ENCODE measurements at regions of chr9 and their contacts with region 1.

Region 1: GRCh38 chr9:73154760-73155159 is 3.1 kb downstream of the ANXA1 start:
- DNase-seq: peak; percentile 22
- H3K4me3 Mint-ChIP-seq: peak overlapping the region; percentile 88
- H3K27ac Mint-ChIP-seq: peak overlapping the region; percentile 97
- H3K4me1 Mint-ChIP-seq: peaks cover 30% of the 10 kb centered on the region
- H3K27me3 Mint-ChIP-seq: no peaks in the 10 kb centered on the region
- CTCF ChIP-seq: no peak

Region 2: GRCh38 chr9:73104342-73104741 is 50.4 kb before region 1 on chr9:
- CTCF ChIA-PET with region 1: interaction called, 21 read pairs
- POLR2A ChIA-PET with region 1: interaction called, 47 read pairs
- intact Hi-C with region 1: loop called (anchors 1 kb)
- DNase-seq: no peak
- H3K4me3 Mint-ChIP-seq: no peak overlapping the region
- H3K27ac Mint-ChIP-seq: no peak overlapping the region
- H3K4me1 Mint-ChIP-seq: peaks cover 7% of the 10 kb centered on the region
- H3K27me3 Mint-ChIP-seq: no peaks in the 10 kb centered on the region
- CTCF ChIP-seq: no peak

Region 3: DNA sequence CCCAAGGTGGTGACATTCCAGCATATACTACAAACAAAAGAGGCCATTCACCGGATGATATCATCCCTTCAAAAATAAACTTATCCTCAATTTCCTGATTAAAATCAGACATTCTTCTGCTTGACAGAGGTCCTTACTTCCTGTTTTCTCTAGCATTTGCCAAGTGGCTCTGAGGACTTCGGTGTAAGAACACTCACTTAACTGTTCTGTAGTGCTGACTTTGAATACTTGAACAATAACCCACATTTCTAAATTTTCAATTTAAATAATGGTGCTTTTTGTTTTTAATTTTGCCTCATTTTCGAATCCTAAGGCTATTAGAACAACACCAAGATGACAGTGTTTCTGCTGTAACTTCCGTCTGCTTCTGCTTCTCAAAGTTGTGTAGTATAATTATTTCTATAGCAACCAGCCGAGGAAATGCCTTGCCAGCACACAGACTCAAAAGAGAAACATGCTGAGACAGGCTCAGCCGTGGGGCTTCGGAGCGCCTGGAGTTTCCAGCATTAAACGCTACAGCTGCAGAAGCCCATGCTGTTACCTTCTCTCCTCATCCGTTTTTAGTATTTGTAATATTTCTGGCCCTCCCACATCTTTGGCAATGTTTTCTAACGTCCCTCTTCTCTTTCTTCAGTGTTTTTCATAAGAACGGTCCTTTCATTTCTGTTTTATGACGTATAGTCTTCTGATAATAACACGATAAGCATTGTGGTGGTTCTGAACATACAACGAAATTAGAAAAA is 22.6 kb before region 1 on chr9:
- CTCF ChIA-PET with region 1: interaction called, 6 read pairs
- POLR2A ChIA-PET with region 1: interaction called, 241 read pairs
- intact Hi-C with region 1: loop called (anchors 1 kb)
- DNase-seq: peak; percentile 90
- H3K4me3 Mint-ChIP-seq: peak overlapping the region; percentile 76
- H3K27ac Mint-ChIP-seq: peak overlapping the region; percentile 97
- H3K4me1 Mint-ChIP-seq: peaks cover 31% of the 10 kb centered on the region
- H3K27me3 Mint-ChIP-seq: no peaks in the 10 kb centered on the region
- CTCF ChIP-seq: no peak

Region 4: DNA sequence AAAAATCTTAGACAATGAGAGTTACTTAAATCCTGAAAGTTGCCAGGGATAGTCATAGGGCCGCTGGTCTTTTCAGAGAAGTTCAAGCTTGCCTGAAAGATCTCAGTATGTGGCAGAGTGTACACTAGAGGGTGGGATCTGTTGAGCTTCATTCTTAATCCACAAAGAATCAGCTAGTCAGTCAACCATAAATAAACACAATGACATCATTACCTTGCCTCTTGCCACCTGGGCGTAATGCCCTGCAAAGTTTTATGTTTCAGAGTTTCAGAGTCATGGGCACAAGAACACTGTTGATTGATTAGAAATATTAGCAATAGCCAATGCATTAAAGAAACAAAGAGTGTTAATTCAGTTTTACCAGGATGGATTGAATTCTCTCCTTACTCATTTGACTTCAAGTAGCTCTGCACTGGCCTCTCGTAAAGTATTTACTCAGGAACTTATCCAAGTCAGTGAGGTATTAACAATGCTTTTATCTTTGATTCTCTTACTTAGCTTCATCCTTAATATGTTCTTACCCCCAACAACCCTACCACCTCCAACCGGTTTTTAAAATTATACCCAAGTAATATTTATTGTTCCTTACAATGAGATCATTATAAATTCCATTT is 17.4 kb before region 1 on chr9:
- CTCF ChIA-PET with region 1: interaction called, 6 read pairs
- POLR2A ChIA-PET with region 1: interaction called, 241 read pairs
- intact Hi-C with region 1: loop called (anchors 1 kb)
- DNase-seq: peak; percentile 67
- H3K4me3 Mint-ChIP-seq: peak overlapping the region; percentile 56
- H3K27ac Mint-ChIP-seq: peak overlapping the region; percentile 7
- H3K4me1 Mint-ChIP-seq: peaks cover 28% of the 10 kb centered on the region
- H3K27me3 Mint-ChIP-seq: no peaks in the 10 kb centered on the region
- CTCF ChIP-seq: no peak

Region 5: GRCh38 chr9:73143606-73144328 is 11.0 kb before region 1 on chr9:
- CTCF ChIA-PET with region 1: interaction called, 6 read pairs
- POLR2A ChIA-PET with region 1: interaction called, 66 read pairs
- intact Hi-C with region 1: no loop called
- DNase-seq: peak; percentile 93
- H3K4me3 Mint-ChIP-seq: no peak overlapping the region
- H3K27ac Mint-ChIP-seq: peak overlapping the region; percentile 32
- H3K4me1 Mint-ChIP-seq: peaks cover 43% of the 10 kb centered on the region
- H3K27me3 Mint-ChIP-seq: no peaks in the 10 kb centered on the region
- CTCF ChIP-seq: no peak

Region 6: GRCh38 chr9:73176450-73176875 is 21.7 kb after region 1 on chr9:
- CTCF ChIA-PET with region 1: interaction called, 8 read pairs
- POLR2A ChIA-PET with region 1: interaction called, 34 read pairs
- intact Hi-C with region 1: no loop called
- DNase-seq: peak; percentile 80
- H3K4me3 Mint-ChIP-seq: no peak overlapping the region
- H3K27ac Mint-ChIP-seq: peak overlapping the region; percentile 83
- H3K4me1 Mint-ChIP-seq: peaks cover 15% of the 10 kb centered on the region
- H3K27me3 Mint-ChIP-seq: no peaks in the 10 kb centered on the region
- CTCF ChIP-seq: no peak

Region 7: DNA sequence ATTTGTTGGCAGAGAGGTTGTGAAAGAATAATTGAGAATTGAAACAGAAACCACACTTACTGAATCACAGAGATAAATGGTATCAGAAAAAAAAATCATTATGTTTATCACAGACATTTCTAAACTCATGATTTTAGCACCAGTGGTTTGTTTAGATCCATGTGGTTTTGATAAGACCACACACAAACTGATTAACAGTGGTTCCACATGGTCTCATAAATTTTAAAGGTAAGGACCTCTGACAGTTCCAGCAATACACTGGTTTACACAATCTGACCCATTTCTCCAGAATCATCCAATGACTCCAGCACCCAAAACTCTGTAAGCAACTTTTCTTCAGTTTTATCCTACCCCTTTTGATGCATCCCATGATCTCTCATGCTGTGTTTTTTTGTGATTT is 258.1 kb after region 1 on chr9:
- CTCF ChIA-PET with region 1: no interaction called
- POLR2A ChIA-PET with region 1: no interaction called
- intact Hi-C with region 1: no loop called
- DNase-seq: no peak
- H3K4me3 Mint-ChIP-seq: no peak overlapping the region
- H3K27ac Mint-ChIP-seq: no peak overlapping the region
- H3K4me1 Mint-ChIP-seq: no peaks in the 10 kb centered on the region
- H3K27me3 Mint-ChIP-seq: peaks cover 60% of the 10 kb centered on the region
- CTCF ChIP-seq: no peak

Measured in MCF 10A (cell line).